Thyroid gland (tissue), 4 donors: ENCODE measurements at regions of chr20 and their contacts with region 1.

Region 1: GRCh38 chr20:5642155-5642981 is 107.8 kb upstream of the SHLD1 start:
- DNase-seq: peak; percentile 60 to 66
- H3K4me3 ChIP-seq: no peak overlapping the region
- H3K27ac ChIP-seq: peak overlapping the region; percentile 4 to 69 (median 25)
- H3K4me1 ChIP-seq: peaks cover 12 to 16% of the 10 kb centered on the region in 2 donors
- H3K27me3 ChIP-seq: no peaks in the 10 kb centered on the region
- CTCF ChIP-seq: no peak
- POLR2A ChIP-seq: no peak

Region 2: GRCh38 chr20:5596401-5597193 is 45.8 kb before region 1 on chr20:
- intact Hi-C with region 1: no loop called
- DNase-seq: no peak
- H3K4me3 ChIP-seq: no peak overlapping the region
- H3K27ac ChIP-seq: peak overlapping the region in 1 of 3 donors; percentile 20
- H3K4me1 ChIP-seq: peaks cover 12 to 18% of the 10 kb centered on the region in 2 donors
- H3K27me3 ChIP-seq: no peaks in the 10 kb centered on the region
- CTCF ChIP-seq: no peak
- POLR2A ChIP-seq: no peak

Region 3: DNA sequence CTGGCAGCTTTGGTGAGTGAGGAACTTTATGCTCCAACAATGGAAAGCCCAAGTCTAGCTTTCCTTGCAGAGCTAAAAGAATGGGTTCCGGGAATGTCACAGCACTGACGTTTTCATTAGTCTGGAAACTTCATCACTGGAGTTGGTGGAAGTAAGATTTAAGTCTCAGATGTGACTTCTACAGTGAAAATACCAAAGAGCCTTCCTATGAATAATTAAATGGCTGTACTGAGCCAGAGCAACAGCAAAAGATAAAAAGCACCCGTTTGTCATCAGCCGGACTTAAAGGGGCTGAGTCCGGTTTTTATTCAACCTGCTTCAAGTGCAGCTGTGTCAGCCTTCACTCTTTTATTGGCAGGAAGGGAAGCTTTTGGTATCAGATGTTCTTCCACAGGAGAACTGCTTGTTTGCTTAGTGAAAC is 61.3 kb after region 1 on chr20:
- intact Hi-C with region 1: loop called (anchors 10 kb)
- DNase-seq: no peak
- H3K4me3 ChIP-seq: no peak overlapping the region
- H3K27ac ChIP-seq: no peak overlapping the region
- H3K4me1 ChIP-seq: no peaks in the 10 kb centered on the region
- H3K27me3 ChIP-seq: no peaks in the 10 kb centered on the region
- CTCF ChIP-seq: no peak
- POLR2A ChIP-seq: no peak